Breast epithelium (tissue), 4 donors: ENCODE measurements at regions of chr4 and their contacts with region 1.

Region 1: DNA sequence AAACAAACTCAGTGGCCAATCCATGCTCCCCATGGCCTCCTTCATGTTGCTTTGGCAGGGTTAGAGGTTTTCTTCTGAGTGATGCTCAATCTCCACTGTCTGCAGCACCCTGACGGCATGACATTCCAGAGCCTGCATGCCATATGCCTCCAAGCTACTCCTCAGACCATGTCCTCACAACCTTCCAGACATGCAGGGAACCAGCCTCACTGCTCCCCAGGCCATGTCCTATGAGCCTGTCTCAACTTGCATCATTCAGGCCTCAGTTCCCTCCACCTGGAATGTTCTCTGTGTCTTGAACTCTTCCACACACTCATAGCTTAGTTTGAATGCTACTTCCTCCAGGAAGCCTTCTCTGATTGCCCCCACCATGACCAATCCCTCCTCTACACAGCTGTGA is 18.8 kb downstream of the PROM1 start:
- DNase-seq: no peak
- H3K4me3 ChIP-seq: no peak overlapping the region
- H3K27ac ChIP-seq: no peak overlapping the region
- H3K4me1 ChIP-seq: peaks cover 0 to 4% of the 10 kb centered on the region in 2 donors
- H3K27me3 ChIP-seq: no peaks in the 10 kb centered on the region
- CTCF ChIP-seq: no peak
- POLR2A ChIP-seq: no peak

Region 2: GRCh38 chr4:16018061-16018676 is 46.9 kb before region 1 on chr4:
- intact Hi-C with region 1: loop called (anchors 1 kb)
- DNase-seq: no peak
- H3K4me3 ChIP-seq: no peak overlapping the region
- H3K27ac ChIP-seq: no peak overlapping the region
- H3K4me1 ChIP-seq: no peaks in the 10 kb centered on the region
- H3K27me3 ChIP-seq: no peaks in the 10 kb centered on the region
- CTCF ChIP-seq: no peak
- POLR2A ChIP-seq: no peak

Region 3: GRCh38 chr4:16029262-16029661 is 35.8 kb before region 1 on chr4:
- intact Hi-C with region 1: no loop called
- DNase-seq: no peak
- H3K4me3 ChIP-seq: no peak overlapping the region
- H3K27ac ChIP-seq: no peak overlapping the region
- H3K4me1 ChIP-seq: no peaks in the 10 kb centered on the region
- H3K27me3 ChIP-seq: no peaks in the 10 kb centered on the region
- CTCF ChIP-seq: no peak
- POLR2A ChIP-seq: no peak